ENCODE measurements at regions of chr6 and their contacts with region 1.

Region 1: DNA sequence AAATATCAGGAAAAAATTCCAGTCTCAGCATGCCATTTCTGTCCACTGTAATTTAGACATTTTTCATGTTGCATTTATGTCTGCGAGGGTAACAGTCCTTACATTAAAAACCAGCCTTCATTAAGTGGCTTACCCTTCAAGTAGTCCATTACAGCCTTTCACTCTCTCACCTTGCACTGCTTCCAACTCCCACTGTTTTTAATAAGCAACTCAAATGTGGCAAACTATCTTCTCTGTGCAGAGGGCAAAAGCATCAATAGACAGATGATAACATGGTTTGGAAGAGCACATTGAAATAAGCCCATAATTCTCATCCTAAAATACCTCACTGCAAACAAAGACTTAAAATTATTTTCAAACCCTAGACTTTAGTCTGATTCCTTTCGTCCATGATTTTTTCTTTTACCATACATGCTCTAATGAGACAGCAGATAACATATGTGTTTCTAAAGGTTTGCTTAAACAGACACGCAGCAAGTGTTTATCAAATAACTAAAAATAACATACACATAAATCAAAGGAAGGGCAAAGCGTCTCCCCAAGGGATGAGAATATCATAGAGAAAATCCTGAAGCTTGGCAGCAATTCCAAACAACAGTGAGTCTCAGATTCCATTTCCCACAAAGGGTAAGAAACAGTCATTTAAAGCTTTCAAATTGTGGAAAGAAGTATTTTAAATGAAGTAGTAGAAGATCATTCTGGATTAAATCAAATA is 130.4 kb downstream of the PTPRK start:
- DNase-seq: no peak
- H3K4me3 ChIP-seq: no peak overlapping the region
- CTCF ChIP-seq: no peak
- POLR2A ChIP-seq: no peak

Region 2: GRCh38 chr6:128168244-128168643 is 221.7 kb before region 1 on chr6:
- intact Hi-C with region 1: no loop called
- DNase-seq: no peak
- H3K4me3 ChIP-seq: no peak overlapping the region
- CTCF ChIP-seq: no peak
- POLR2A ChIP-seq: no peak

Region 3: DNA sequence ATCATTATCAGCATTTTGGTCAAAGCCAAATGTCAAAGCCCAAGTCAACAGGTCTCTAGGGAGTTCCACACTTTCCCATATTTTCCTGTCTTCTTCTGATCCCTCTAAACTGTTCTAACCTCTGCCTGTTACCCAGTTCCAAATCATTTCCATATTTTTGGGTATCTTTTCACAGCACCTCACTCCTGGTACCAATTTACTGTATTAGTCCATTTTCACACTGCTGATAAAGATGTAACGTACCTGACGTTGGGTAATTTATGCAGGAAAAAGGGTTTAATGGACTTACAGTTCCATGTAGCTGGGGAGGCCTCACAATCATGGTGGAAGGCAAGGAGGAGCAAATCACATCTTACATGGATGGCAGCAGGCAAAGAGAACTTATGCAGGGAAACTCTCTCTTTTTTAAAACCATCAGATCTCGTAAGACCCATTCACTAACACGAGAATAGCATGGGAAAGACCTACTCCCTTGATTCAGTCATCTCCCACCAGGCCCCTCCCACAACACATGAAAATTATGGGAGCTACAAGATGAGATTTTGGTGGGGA is 12.9 kb before region 1 on chr6:
- intact Hi-C with region 1: loop called (anchors 1 kb)
- DNase-seq: no peak
- H3K4me3 ChIP-seq: no peak overlapping the region
- CTCF ChIP-seq: no peak
- POLR2A ChIP-seq: no peak